Activated B cell treated with CpG ODN at 0.5 μM for 24 hours (primary cell): ENCODE measurements at regions of chr2 and their contacts with region 1.

Region 1: DNA sequence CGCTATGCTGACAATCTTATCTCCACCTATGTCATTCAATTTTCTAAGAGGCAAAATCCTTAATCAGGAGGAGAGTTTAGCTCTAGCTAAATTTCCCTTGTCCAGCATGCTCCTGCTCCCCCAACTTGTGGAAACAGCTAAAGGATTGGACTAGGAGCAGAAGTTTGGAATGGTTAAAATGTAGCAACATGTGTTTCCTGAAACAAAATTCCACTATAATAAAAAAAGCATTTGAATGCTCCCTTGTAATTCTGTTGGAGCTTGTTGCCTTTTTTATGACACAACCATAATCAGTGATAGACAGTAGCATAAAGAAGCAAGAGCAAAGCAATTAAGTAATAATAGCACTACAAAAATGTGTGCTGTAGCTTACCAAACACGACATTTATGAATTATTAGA is 6.9 kb downstream of the ACTR3 start:
- DNase-seq: no peak
- ATAC-seq: no peak
- H3K4me3 Mint-ChIP-seq: peak overlapping the region; percentile 66
- H3K27ac Mint-ChIP-seq: peak overlapping the region; percentile 37
- H3K4me1 Mint-ChIP-seq: peaks cover 100% of the 10 kb centered on the region
- H3K27me3 Mint-ChIP-seq: no peaks in the 10 kb centered on the region
- CTCF ChIP-seq: no peak

Region 2: GRCh38 chr2:113910110-113910717 is 13.4 kb after region 1 on chr2:
- CTCF ChIA-PET with region 1: no interaction called
- POLR2A ChIA-PET with region 1: interaction called, 5 read pairs
- intact Hi-C with region 1: loop called (anchors 2 kb)
- DNase-seq: no peak
- ATAC-seq: peak; percentile 66
- H3K4me3 Mint-ChIP-seq: peak overlapping the region; percentile 29
- H3K27ac Mint-ChIP-seq: peak overlapping the region; percentile 75
- H3K4me1 Mint-ChIP-seq: peaks cover 79% of the 10 kb centered on the region
- H3K27me3 Mint-ChIP-seq: no peaks in the 10 kb centered on the region
- CTCF ChIP-seq: no peak